Naive thymus-derived CD4-positive, alpha-beta T cell (primary cell): ENCODE measurements at regions of chr4 and their contacts with region 1.

Region 1: GRCh38 chr4:110516106-110516922 is 40.4 kb downstream of the ENPEP start:
- DNase-seq: peak; percentile 29 to 67 (median 61)
- ATAC-seq: peak; percentile 91
- H3K4me3 ChIP-seq: peak overlapping the region; percentile 66
- H3K4me3 Mint-ChIP-seq: peak overlapping the region; percentile 84 to 99 (median 91)
- H3K27ac ChIP-seq: peak overlapping the region; percentile 58
- H3K27ac Mint-ChIP-seq: peak overlapping the region in 8 of 9 donors; percentile 7 to 79 (median 29)
- H3K4me1 ChIP-seq: peaks cover 0 to 5% of the 10 kb centered on the region in 2 donors
- H3K4me1 Mint-ChIP-seq: peaks cover 7 to 16% (median 11%) of the 10 kb centered on the region in 7 donors
- H3K27me3 ChIP-seq: no peaks in the 10 kb centered on the region
- H3K27me3 Mint-ChIP-seq: peaks cover 1 to 13% (median 5%) of the 10 kb centered on the region in 5 donors

Region 2: GRCh38 chr4:108650212-108651013 is 1865.9 kb before region 1 on chr4 and contains the start of gene OSTC:
- CTCF ChIA-PET with region 1: no interaction called
- POLR2A ChIA-PET with region 1: no interaction called
- intact Hi-C with region 1: loop called in 1 of 2 experiments (anchors 10 kb)
- DNase-seq: peak; percentile 88 to 95 (median 91)
- ATAC-seq: peak; percentile 94
- H3K4me3 ChIP-seq: peak within 1 kb of the TSS; percentile 98
- H3K4me3 Mint-ChIP-seq: peak within 1 kb of the TSS; percentile 90 to 99 (median 94)
- H3K27ac ChIP-seq: peak within 1 kb of the TSS; percentile 96
- H3K27ac Mint-ChIP-seq: peak within 1 kb of the TSS; percentile 89 to 99 (median 98)
- H3K4me1 ChIP-seq: peaks cover 8 to 13% of the 10 kb centered on the region in 2 donors
- H3K4me1 Mint-ChIP-seq: peaks cover 22 to 49% (median 41%) of the 10 kb centered on the region in 7 donors
- H3K27me3 ChIP-seq: no peaks in the 10 kb centered on the region
- H3K27me3 Mint-ChIP-seq: no peaks in the 10 kb centered on the region
- total RNA-seq, gene OSTC: 31.8 to 98.2 (median 55.6) TPM

Region 3: GRCh38 chr4:109998867-109999584 is 517.3 kb before region 1 on chr4:
- CTCF ChIA-PET with region 1: interaction called, 111 read pairs
- POLR2A ChIA-PET with region 1: interaction called, 3 read pairs
- intact Hi-C with region 1: loop called (anchors 1 kb)
- DNase-seq: peak in 7 of 9 donors; percentile 30 to 70 (median 56)
- ATAC-seq: peak; percentile 83
- H3K4me3 ChIP-seq: no peak overlapping the region
- H3K4me3 Mint-ChIP-seq: no peak overlapping the region
- H3K27ac ChIP-seq: no peak overlapping the region
- H3K27ac Mint-ChIP-seq: no peak overlapping the region
- H3K4me1 ChIP-seq: no peaks in the 10 kb centered on the region
- H3K4me1 Mint-ChIP-seq: peaks cover 0 to 31% (median 0%) of the 10 kb centered on the region in 7 donors
- H3K27me3 ChIP-seq: no peaks in the 10 kb centered on the region
- H3K27me3 Mint-ChIP-seq: peaks cover 0 to 32% (median 5%) of the 10 kb centered on the region in 5 donors

Region 4: GRCh38 chr4:110049951-110050925 is 466.1 kb before region 1 on chr4:
- CTCF ChIA-PET with region 1: interaction called, 13 read pairs
- POLR2A ChIA-PET with region 1: no interaction called
- intact Hi-C with region 1: loop called (anchors 1 kb)
- DNase-seq: peak; percentile 16 to 56 (median 38)
- ATAC-seq: peak; percentile 76
- H3K4me3 ChIP-seq: no peak overlapping the region
- H3K4me3 Mint-ChIP-seq: no peak overlapping the region
- H3K27ac ChIP-seq: no peak overlapping the region
- H3K27ac Mint-ChIP-seq: peak overlapping the region in 1 of 9 donors; percentile 33
- H3K4me1 ChIP-seq: peaks cover 0 to 4% of the 10 kb centered on the region in 2 donors
- H3K4me1 Mint-ChIP-seq: peaks cover 0 to 34% (median 0%) of the 10 kb centered on the region in 7 donors
- H3K27me3 ChIP-seq: no peaks in the 10 kb centered on the region
- H3K27me3 Mint-ChIP-seq: no peaks in the 10 kb centered on the region

Region 5: GRCh38 chr4:110344162-110344561 is 172.2 kb before region 1 on chr4:
- CTCF ChIA-PET with region 1: no interaction called
- POLR2A ChIA-PET with region 1: no interaction called
- intact Hi-C with region 1: loop called in 1 of 2 experiments (anchors 10 kb)
- DNase-seq: no peak
- ATAC-seq: no peak
- H3K4me3 ChIP-seq: no peak overlapping the region
- H3K4me3 Mint-ChIP-seq: no peak overlapping the region
- H3K27ac ChIP-seq: no peak overlapping the region
- H3K27ac Mint-ChIP-seq: no peak overlapping the region
- H3K4me1 ChIP-seq: no peaks in the 10 kb centered on the region
- H3K4me1 Mint-ChIP-seq: no peaks in the 10 kb centered on the region
- H3K27me3 ChIP-seq: no peaks in the 10 kb centered on the region
- H3K27me3 Mint-ChIP-seq: peaks cover 8 to 35% (median 23%) of the 10 kb centered on the region in 5 donors

Region 6: GRCh38 chr4:110484740-110485139 is 31.6 kb before region 1 on chr4:
- CTCF ChIA-PET with region 1: no interaction called
- POLR2A ChIA-PET with region 1: no interaction called
- intact Hi-C with region 1: no loop called
- DNase-seq: no peak
- ATAC-seq: no peak
- H3K4me3 ChIP-seq: no peak overlapping the region
- H3K4me3 Mint-ChIP-seq: no peak overlapping the region
- H3K27ac ChIP-seq: no peak overlapping the region
- H3K27ac Mint-ChIP-seq: no peak overlapping the region
- H3K4me1 ChIP-seq: no peaks in the 10 kb centered on the region
- H3K4me1 Mint-ChIP-seq: peaks cover 0 to 2% (median 0%) of the 10 kb centered on the region in 7 donors
- H3K27me3 ChIP-seq: no peaks in the 10 kb centered on the region
- H3K27me3 Mint-ChIP-seq: peaks cover 18 to 34% (median 25%) of the 10 kb centered on the region in 5 donors

Region 7: GRCh38 chr4:110631584-110632505 is 115.5 kb after region 1 on chr4:
- CTCF ChIA-PET with region 1: no interaction called
- POLR2A ChIA-PET with region 1: no interaction called
- intact Hi-C with region 1: no loop called
- DNase-seq: no peak
- ATAC-seq: peak; percentile 63
- H3K4me3 ChIP-seq: no peak overlapping the region
- H3K4me3 Mint-ChIP-seq: peak overlapping the region; percentile 48 to 82 (median 65)
- H3K27ac ChIP-seq: no peak overlapping the region
- H3K27ac Mint-ChIP-seq: peak overlapping the region in 3 of 9 donors; percentile 67 to 80 (median 73)
- H3K4me1 ChIP-seq: no peaks in the 10 kb centered on the region
- H3K4me1 Mint-ChIP-seq: peaks cover 5 to 41% (median 24%) of the 10 kb centered on the region in 7 donors
- H3K27me3 ChIP-seq: peaks cover 0 to 75% of the 10 kb centered on the region in 2 donors
- H3K27me3 Mint-ChIP-seq: peaks cover 73 to 92% (median 77%) of the 10 kb centered on the region in 5 donors